ENCODE measurements at regions of chr9 and their contacts with region 1.

Region 1: DNA sequence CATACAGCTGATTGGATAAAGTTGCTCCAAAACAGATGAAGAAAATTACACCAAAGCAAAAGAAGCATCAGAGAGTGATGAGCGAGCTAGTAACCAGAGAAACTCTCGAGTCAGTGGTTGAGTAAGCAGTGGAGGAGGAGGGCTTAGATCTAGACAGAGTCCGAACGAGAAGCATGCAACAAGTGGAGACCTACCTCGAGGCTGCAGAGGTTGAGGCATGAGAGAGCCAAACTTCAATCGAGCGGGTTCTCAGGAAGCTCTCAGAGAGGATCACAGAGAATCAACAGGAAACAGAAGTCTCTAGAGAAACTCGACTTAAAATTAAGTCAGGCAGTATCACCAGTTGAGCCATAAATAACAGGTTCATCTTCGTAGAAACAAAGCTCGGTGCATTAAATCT is 6.1 kb downstream of the RUSC2 start:
- DNase-seq: no peak
- H3K4me3 ChIP-seq: no peak overlapping the region
- H3K27ac ChIP-seq: 0 out of 2 replicates have a peak overlapping the region, but pooled peaks have one; percentile 16
- H3K4me1 ChIP-seq: peaks cover 46% of the 10 kb centered on the region
- H3K27me3 ChIP-seq: no peaks in the 10 kb centered on the region

Region 2: GRCh38 chr9:34211395-34211794 is 1284.6 kb before region 1 on chr9:
- in situ Hi-C with region 1: no loop called
- DNase-seq: no peak
- H3K4me3 ChIP-seq: no peak overlapping the region
- H3K27ac ChIP-seq: no peak overlapping the region
- H3K4me1 ChIP-seq: peaks cover 5% of the 10 kb centered on the region; the same call in 1 of the 2 replicates
- H3K27me3 ChIP-seq: no peaks in the 10 kb centered on the region

Region 3: GRCh38 chr9:35436933-35437332 is 59.1 kb before region 1 on chr9:
- in situ Hi-C with region 1: no loop called
- DNase-seq: no peak
- H3K4me3 ChIP-seq: no peak overlapping the region
- H3K27ac ChIP-seq: no peak overlapping the region
- H3K4me1 ChIP-seq: no peaks in the 10 kb centered on the region
- H3K27me3 ChIP-seq: peaks cover 27% of the 10 kb centered on the region

Region 4: DNA sequence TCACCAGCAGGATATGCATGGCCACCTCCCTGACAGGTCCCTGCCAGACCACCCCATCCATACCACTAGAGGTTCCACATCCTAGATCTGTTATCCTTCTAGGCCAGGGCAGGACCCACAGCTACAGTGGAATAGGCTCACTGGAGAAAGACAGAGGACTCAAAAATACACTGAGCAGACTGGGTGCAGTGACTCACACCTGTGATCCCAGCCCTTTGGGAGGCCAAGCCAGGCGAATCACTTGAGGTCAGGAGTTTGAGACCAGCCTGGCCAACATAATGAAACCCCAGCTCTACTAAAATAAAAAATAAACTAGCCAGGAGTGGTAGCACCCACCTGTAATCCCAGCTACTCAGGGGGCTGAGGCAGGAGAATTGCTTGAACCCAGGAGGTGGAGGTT is 52.6 kb after region 1 on chr9:
- in situ Hi-C with region 1: loop called (anchors 5 kb)
- DNase-seq: peak; percentile 55
- H3K4me3 ChIP-seq: no peak overlapping the region
- H3K27ac ChIP-seq: peak overlapping the region; percentile 40; the same call in 1 of the 2 replicates
- H3K4me1 ChIP-seq: peaks cover 54% of the 10 kb centered on the region
- H3K27me3 ChIP-seq: no peaks in the 10 kb centered on the region